Thyroid gland (tissue), 4 donors: ENCODE measurements at regions of chr11 and their contacts with region 1.

Region 1: GRCh38 chr11:66429983-66430602 is 8.6 kb downstream of the MRPL11 start:
- DNase-seq: peak; percentile 70
- H3K4me3 ChIP-seq: no peak overlapping the region
- H3K27ac ChIP-seq: no peak overlapping the region
- H3K4me1 ChIP-seq: no peaks in the 10 kb centered on the region
- H3K27me3 ChIP-seq: no peaks in the 10 kb centered on the region
- CTCF ChIP-seq: peak; percentile 35 to 75 (median 53)
- POLR2A ChIP-seq: no peak

Region 2: DNA sequence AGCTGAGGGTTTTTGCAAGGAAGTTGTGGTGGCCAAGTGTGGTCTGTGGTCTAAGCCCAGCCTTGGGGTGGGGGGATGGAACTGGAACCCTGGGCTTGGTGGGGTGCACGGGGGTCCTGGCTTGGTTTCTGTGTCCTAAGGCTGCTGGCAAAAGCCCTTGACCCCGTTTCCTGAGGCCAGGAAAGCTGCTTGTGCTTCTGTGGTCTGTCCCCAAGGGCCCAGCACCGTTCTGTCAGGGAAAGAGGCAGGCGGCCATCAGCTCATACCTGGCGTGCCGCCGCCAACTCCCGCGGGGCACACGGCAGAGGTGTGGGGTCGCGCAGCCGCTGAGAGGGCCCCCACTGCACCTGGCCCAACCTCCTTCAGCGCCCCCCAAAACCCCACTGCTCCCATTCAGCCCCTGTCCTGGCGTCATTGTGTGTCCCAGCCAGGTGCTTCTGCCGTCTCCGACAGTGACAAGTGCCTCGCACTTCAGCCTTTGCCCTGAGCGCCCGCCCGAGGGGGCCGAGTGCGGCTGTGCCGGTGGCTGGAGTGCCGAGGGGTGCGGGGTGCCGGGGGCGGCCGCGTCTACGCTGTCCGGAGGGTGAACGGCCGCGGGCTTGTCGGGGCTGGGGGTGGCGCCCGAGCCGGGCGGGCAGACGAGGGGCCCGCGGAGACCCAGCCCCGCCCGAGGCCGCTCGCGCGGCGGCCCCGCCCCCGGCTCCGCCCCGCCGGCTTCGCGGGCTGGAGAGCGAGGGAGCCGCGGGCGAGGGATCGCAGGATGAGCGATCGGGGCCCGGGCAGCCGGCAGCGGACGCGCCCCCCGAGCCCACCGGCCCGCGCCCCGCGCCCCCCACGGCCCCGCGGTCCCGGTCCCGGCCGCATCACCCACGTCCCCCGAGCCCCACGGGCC is 152.4 kb before region 1 on chr11 and contains the start of gene CNIH2:
- intact Hi-C with region 1: no loop called
- DNase-seq: peak; percentile 44 to 51
- H3K4me3 ChIP-seq: peak within 1 kb of the TSS in 1 of 3 donors; percentile 11
- H3K27ac ChIP-seq: no peak within 1 kb of the TSS
- H3K4me1 ChIP-seq: peaks cover 4 to 13% of the 10 kb centered on the region in 2 donors
- H3K27me3 ChIP-seq: no peaks in the 10 kb centered on the region
- CTCF ChIP-seq: no peak
- POLR2A ChIP-seq: peak in 1 of 2 donors; percentile 18
- total RNA-seq, gene CNIH2: not detected

Region 3: GRCh38 chr11:66408488-66409214 is 21.4 kb before region 1 on chr11:
- intact Hi-C with region 1: loop called (anchors 2 kb)
- DNase-seq: peak; percentile 84 to 85
- H3K4me3 ChIP-seq: no peak overlapping the region
- H3K27ac ChIP-seq: no peak overlapping the region
- H3K4me1 ChIP-seq: peaks cover 0 to 5% of the 10 kb centered on the region in 2 donors
- H3K27me3 ChIP-seq: no peaks in the 10 kb centered on the region
- CTCF ChIP-seq: peak; percentile 99 to 100 (median 99)
- POLR2A ChIP-seq: no peak

Region 4: GRCh38 chr11:66546368-66546965 is 116.4 kb after region 1 on chr11 and contains the start of gene ACTN3:
- intact Hi-C with region 1: no loop called
- DNase-seq: peak; percentile 18 to 25
- H3K4me3 ChIP-seq: peak within 1 kb of the TSS; percentile 80 to 94 (median 82)
- H3K27ac ChIP-seq: peak within 1 kb of the TSS in 1 of 3 donors; percentile 58
- H3K4me1 ChIP-seq: peaks cover 15 to 16% of the 10 kb centered on the region in 2 donors
- H3K27me3 ChIP-seq: no peaks in the 10 kb centered on the region
- CTCF ChIP-seq: no peak
- POLR2A ChIP-seq: no peak
- total RNA-seq, gene ACTN3: 0.27 TPM in 1 of 4 donors, not detected in the others